ENCODE measurements at regions of chr11 and their contacts with region 1.

Region 1: DNA sequence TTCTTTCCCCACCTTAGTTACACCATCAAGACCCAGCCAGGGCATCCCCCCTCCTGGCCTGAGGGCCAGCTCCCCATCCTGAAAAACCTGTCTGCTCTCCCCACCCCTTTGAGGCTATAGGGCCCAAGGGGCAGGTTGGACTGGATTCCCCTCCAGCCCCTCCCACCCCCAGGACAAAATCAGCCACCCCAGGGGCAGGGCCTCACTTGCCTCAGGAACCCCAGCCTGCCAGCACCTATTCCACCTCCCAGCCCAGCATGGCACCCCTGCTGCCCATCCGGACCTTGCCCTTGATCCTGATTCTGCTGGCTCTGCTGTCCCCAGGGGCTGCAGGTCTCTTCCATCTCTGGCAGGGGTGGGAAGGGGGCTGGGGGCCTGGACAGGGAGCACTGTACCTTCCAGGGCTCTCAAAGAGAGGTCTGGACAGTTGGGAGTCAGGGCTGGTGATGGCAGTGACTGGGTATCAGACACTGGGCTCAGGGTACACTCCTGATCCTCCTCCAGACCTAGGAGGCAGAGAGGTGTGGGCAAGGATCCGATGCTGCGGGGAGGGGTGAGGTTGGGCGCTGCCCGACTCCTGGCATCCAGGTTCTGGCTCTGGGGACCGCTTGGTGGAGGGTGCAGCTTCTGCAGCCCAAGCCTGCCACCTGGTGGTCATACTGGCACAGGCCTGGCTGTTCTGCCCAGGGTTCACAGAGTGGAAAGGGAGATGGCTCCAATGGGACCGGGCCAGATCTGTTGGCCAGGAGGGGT is at the start of gene UPK2:
- DNase-seq: peak; percentile 72
- H3K4me3 ChIP-seq: no peak within 1 kb of the TSS
- H3K27ac ChIP-seq: no peak within 1 kb of the TSS
- H3K4me1 ChIP-seq: peaks cover 2% of the 10 kb centered on the region
- H3K27me3 ChIP-seq: no peaks in the 10 kb centered on the region
- CTCF ChIP-seq: peak; percentile 95 to 98
- total RNA-seq, gene UPK2: 0.45 TPM in 1 of 2 donors, not detected in the other

Region 2: DNA sequence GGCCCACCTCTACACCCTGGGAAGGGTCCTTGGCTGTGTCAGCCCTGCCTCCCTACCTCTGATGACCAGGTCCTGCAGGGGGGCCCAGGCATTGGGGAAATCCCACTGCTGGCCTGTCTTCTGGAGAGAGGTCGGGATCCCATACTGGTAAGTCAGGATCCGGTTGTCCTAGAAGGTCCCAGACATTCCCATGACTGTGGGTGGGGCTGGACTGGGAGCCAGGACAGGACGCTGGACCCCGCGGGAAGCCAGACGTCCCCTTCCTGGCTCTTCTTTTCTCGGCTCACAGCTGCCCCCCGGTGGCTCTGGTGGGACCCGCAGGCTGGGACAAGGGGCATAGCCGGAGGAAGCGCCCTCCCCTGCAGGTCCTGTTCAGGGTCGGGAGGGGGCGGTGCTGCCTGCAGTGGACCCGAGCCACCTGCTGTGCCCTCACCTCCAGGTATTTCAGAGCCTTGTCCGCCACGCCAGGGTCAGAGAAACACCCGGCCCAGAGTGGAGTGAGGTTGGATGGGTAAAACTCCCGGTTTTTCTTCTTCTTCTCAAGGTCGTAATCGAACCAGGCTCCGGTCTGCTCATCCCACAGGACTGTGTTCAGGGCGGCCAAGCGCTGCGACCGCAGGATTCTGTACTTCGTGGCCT is 296.8 kb before region 1 on chr11:
- CTCF ChIA-PET with region 1: no interaction called
- dilution Hi-C with region 1: no loop called
- in situ Hi-C with region 1: no loop called
- intact Hi-C with region 1: loop called (anchors 1 kb)
- DNase-seq: peak; percentile 58
- H3K4me3 ChIP-seq: no peak overlapping the region
- H3K27ac ChIP-seq: no peak overlapping the region
- H3K4me1 ChIP-seq: peaks cover 23% of the 10 kb centered on the region
- H3K27me3 ChIP-seq: no peaks in the 10 kb centered on the region
- CTCF ChIP-seq: peak; percentile 81 to 85

Region 3: DNA sequence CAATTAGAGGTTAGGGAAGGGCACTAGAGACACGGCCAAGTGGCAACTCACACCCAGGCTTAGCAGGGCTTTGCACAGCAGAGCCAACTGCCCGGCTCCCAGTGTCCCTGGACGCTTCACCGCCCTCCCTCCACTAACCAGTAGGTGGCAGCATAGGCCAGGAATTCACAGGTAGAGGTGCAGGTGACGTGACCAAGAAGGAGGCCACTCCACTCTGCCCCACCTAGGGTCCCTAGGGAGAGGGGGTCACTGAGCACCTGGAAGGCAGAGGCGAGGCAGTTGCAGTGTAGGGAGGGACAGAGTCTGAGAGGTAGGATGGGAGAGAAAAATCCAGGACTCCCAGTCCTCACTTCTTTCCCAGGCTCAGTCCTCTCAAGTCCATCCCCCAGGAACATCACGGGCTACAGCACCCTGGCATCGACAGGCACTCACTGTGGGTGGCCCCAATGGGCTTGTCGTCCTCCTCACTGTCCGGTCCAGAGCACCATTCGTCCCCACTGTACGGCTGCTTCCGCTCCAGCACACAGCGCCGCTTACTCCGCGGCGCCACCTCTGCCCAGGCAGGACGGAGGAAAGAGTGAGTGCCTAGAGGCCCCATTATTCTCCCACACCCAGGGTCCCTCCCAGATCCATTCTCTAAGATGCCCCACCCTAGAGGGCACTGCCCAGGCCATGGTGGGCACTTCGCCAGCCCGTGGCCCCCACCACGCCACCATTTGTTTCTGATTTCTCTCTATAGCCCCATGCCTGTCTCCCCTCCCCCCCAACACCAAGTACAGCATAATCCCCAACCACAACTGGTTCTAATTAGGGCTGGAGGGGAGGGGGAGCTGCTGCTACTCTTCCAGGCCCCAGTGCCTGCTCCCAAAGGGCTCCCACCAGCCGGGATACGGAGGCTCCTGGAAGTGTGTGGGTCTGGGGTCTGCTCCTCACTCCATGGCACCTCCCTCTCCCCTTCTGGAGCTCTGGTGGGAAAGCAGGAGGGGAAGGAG is 48.9 kb before region 1 on chr11:
- CTCF ChIA-PET with region 1: no interaction called
- dilution Hi-C with region 1: no loop called
- in situ Hi-C with region 1: no loop called
- intact Hi-C with region 1: loop called (anchors 1 kb)
- DNase-seq: peak; percentile 69
- H3K4me3 ChIP-seq: no peak overlapping the region
- H3K27ac ChIP-seq: no peak overlapping the region
- H3K4me1 ChIP-seq: peaks cover 43% of the 10 kb centered on the region
- H3K27me3 ChIP-seq: no peaks in the 10 kb centered on the region
- CTCF ChIP-seq: peak; percentile 88 to 92

Region 4: DNA sequence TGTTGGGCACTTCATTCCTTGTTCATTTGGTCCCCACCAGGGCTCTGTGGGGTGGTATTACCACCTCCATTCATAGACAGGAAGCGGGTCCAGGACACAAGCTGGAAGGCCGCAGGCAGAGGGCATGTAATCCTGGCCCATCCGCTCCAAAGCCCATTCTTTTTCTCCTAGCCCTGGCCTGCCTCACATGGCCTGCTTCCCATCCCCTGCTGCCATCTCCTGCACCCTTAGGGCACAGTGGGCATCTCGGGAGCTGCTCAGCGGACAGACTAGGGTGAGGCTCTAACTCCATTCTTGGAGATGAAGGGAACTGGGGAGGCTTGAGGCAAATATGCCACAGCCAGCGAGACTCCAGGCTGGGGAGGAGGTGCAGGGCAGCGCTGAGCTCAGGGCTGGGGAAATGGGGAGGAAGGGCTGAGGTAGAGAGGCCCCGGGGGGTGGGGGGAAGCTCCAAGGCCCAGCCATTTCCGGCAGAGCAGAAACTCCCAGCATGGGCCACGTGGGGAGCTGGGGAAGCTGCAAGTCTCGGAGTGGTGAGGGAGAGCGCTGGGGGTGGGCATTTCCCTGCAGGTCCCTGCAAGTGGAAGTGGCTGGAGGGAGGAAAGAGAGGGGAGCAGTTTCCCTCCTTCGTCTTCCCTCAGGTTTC is 16.2 kb before region 1 on chr11:
- CTCF ChIA-PET with region 1: no interaction called
- dilution Hi-C with region 1: no loop called
- in situ Hi-C with region 1: no loop called
- intact Hi-C with region 1: loop called (anchors 2 kb)
- DNase-seq: no peak
- H3K4me3 ChIP-seq: no peak overlapping the region
- H3K27ac ChIP-seq: no peak overlapping the region
- H3K4me1 ChIP-seq: peaks cover 24% of the 10 kb centered on the region
- H3K27me3 ChIP-seq: no peaks in the 10 kb centered on the region
- CTCF ChIP-seq: no peak

Region 5: DNA sequence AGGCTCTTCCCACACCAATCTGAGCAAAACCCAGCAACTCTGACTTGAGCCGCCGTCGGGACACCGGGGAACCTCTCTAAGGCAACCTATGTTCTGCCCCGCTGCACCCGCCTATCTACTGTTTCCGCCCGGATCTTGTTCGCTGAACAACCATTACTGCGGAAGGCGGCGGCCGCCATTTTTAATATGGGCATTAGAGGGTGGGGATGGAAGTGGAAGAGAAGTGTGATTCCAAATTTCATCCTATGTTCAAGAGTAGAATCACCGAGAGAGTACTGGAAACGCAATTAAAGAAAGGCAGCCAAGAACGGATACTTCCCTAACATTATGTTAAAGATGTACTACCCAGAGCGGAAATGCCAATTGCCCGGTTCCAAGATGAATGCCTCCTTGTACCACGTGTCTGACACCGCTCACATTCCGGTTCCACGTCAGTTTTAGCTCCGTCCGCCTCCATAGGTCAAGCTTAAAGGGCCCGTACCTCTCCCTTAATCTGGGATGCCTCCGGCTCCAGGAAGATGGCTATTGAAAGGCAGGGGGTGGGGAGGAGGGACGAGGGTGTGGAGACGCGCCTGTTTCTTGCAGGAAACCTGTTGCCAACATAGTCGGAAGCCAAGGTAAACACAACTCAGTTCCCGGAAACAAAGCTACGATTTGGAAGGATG is 145.6 kb after region 1 on chr11 and contains the start of gene DPAGT1:
- CTCF ChIA-PET with region 1: no interaction called
- dilution Hi-C with region 1: no loop called
- in situ Hi-C with region 1: no loop called
- intact Hi-C with region 1: no loop called
- DNase-seq: peak; percentile 97
- H3K4me3 ChIP-seq: peak within 1 kb of the TSS; percentile 80 to 81 (median 81)
- H3K27ac ChIP-seq: peak within 1 kb of the TSS; percentile 91
- H3K4me1 ChIP-seq: peaks cover 19% of the 10 kb centered on the region
- H3K27me3 ChIP-seq: no peaks in the 10 kb centered on the region
- CTCF ChIP-seq: no peak
- total RNA-seq, gene DPAGT1: 22.2 to 49.3 TPM